ENCODE measurements at regions of chr9 and their contacts with region 1.

Region 1: GRCh38 chr9:32378993-32379729 is 5.3 kb upstream of the ACO1 start:
- DNase-seq: peak; percentile 69
- H3K4me3 ChIP-seq: peak overlapping the region in 1 of 2 experiments; percentile 40; a peak in 1 of 4 replicates
- H3K27ac ChIP-seq: no peak overlapping the region
- H3K4me1 ChIP-seq: peaks cover 4% of the 10 kb centered on the region in 2 experiments; a peak in 2 of 4 replicates
- H3K27me3 ChIP-seq: no peaks in the 10 kb centered on the region
- CTCF ChIP-seq: peak; percentile 88
- EP300 ChIP-seq: no peak
- RAD21 ChIP-seq: peak; percentile 94

Region 2: GRCh38 chr9:32426278-32426939 is 47.2 kb after region 1 on chr9:
- CTCF ChIA-PET with region 1: interaction called, 200 read pairs
- POLR2A ChIA-PET with region 1: no interaction called
- DNase-seq: no peak
- H3K4me3 ChIP-seq: no peak overlapping the region
- H3K27ac ChIP-seq: no peak overlapping the region
- H3K4me1 ChIP-seq: peaks cover 0 to 11% of the 10 kb centered on the region in 2 experiments; a peak in 3 of 4 replicates
- H3K27me3 ChIP-seq: no peaks in the 10 kb centered on the region
- CTCF ChIP-seq: no peak
- EP300 ChIP-seq: no peak
- RAD21 ChIP-seq: no peak

Region 3: GRCh38 chr9:32497921-32498320 is 118.8 kb after region 1 on chr9:
- CTCF ChIA-PET with region 1: interaction called, 12 read pairs
- POLR2A ChIA-PET with region 1: no interaction called
- DNase-seq: no peak
- H3K4me3 ChIP-seq: no peak overlapping the region; a peak in 1 of 4 replicates
- H3K27ac ChIP-seq: no peak overlapping the region
- H3K4me1 ChIP-seq: 0 out of 4 replicates have a peak, but pooled peaks cover 0 to 3% of the 10 kb centered on the region in 2 experiments
- H3K27me3 ChIP-seq: no peaks in the 10 kb centered on the region
- CTCF ChIP-seq: no peak
- EP300 ChIP-seq: no peak
- RAD21 ChIP-seq: no peak

Region 4: GRCh38 chr9:32543047-32543446 is 163.9 kb after region 1 on chr9:
- CTCF ChIA-PET with region 1: interaction called, 33 read pairs
- POLR2A ChIA-PET with region 1: no interaction called
- DNase-seq: no peak
- H3K4me3 ChIP-seq: no peak overlapping the region
- H3K27ac ChIP-seq: no peak overlapping the region
- H3K4me1 ChIP-seq: no peaks in the 10 kb centered on the region; a peak in 1 of 4 replicates
- H3K27me3 ChIP-seq: no peaks in the 10 kb centered on the region
- CTCF ChIP-seq: no peak
- EP300 ChIP-seq: no peak
- RAD21 ChIP-seq: no peak

Region 5: DNA sequence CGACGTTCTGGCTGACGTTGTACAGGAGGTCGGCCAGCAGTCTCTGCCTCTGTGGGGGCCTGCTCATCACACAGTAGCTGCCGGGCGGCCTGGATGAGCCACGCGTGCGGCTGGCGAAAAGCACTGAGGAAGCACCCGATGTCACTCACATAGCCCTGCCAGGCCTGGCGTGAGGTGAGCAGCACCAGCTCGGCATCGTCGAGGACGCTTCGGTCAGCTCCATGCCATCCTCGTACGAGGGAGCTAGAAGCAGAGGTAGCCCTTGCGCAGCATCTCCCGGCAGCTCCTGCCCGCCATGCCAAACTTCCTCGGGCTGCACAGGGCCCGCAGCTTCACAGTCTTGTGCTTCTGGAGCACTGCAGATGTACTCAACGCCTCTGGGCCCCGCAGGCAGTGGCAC is 187.6 kb after region 1 on chr9:
- CTCF ChIA-PET with region 1: interaction called, 620 read pairs
- POLR2A ChIA-PET with region 1: no interaction called
- DNase-seq: no peak
- H3K4me3 ChIP-seq: no peak overlapping the region
- H3K27ac ChIP-seq: no peak overlapping the region
- H3K4me1 ChIP-seq: peaks cover 11 to 13% of the 10 kb centered on the region in 2 experiments; a peak in 3 of 4 replicates
- H3K27me3 ChIP-seq: no peaks in the 10 kb centered on the region
- CTCF ChIP-seq: no peak
- EP300 ChIP-seq: no peak
- RAD21 ChIP-seq: no peak

Region 6: GRCh38 chr9:32968101-32969011 is 589.2 kb after region 1 on chr9:
- CTCF ChIA-PET with region 1: interaction called, 76 read pairs
- POLR2A ChIA-PET with region 1: no interaction called
- DNase-seq: peak; percentile 51
- H3K4me3 ChIP-seq: no peak overlapping the region
- H3K27ac ChIP-seq: no peak overlapping the region
- H3K4me1 ChIP-seq: no peaks in the 10 kb centered on the region; a peak in 1 of 4 replicates
- H3K27me3 ChIP-seq: no peaks in the 10 kb centered on the region
- CTCF ChIP-seq: peak; percentile 94
- EP300 ChIP-seq: no peak
- RAD21 ChIP-seq: peak; percentile 87

Measured in SK-N-SH (cell line).